A673 (cell line): ENCODE measurements at regions of chr16 and their contacts with region 1.

Region 1: GRCh38 chr16:18801197-18801972 is at the start of gene ARL6IP1:
- DNase-seq: peak; percentile 99
- H3K4me3 ChIP-seq: peak within 1 kb of the TSS; percentile 94
- H3K27ac ChIP-seq: peak within 1 kb of the TSS; percentile 95
- H3K4me1 ChIP-seq: peaks cover 51% of the 10 kb centered on the region
- H3K27me3 ChIP-seq: no peaks in the 10 kb centered on the region
- CTCF ChIP-seq: peak; percentile 94
- total RNA-seq, gene ARL6IP1: 179 and 223 TPM in 2 replicates

Region 2: DNA sequence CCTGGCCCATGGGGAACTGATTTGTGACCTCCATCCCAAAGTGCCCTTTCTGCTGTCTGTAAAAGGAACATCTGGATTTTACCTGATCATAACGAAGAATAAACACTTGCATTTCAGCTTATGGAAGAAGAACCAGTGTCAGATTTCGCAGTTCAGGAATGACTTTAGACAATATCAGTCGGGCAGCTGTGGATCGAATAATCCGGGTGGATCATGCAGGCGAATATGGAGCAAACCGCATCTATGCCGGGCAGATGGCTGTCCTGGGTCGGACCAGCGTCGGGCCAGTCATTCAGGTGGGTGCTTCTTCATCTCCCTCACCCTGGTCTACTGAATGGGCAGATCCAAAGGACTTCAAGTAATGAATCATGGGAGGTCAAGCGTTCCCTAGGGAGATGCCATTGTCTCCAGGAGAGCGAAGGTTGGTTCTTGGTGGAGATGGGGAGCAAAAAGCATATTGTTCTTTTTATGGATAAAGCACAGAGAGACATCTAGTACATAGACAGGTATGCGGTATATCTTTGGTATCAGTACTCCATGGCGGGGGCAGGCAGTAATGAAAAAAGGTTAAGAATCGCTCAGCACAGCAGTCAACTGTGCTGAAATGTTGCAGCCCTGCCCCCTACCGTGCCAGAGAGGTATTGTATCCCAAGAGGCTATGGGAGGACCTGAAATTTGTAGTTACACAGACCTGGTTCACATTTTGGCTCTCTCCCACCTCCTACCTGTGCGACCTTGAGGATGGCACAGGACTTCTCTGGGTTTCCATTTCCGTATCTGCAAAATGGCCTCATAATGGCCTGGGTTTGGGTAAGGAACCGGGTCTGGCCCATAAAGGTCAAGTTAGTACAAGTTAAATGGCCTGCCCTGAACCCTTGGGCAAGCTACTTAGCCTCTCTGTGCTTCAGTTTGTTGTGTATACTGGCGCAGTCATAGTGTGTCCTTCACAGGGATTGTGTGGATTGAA is 270.7 kb after region 1 on chr16:
- CTCF ChIA-PET with region 1: no interaction called
- POLR2A ChIA-PET with region 1: no interaction called
- intact Hi-C with region 1: loop called (anchors 10 kb)
- DNase-seq: peak; percentile 72
- H3K4me3 ChIP-seq: no peak overlapping the region
- H3K27ac ChIP-seq: no peak overlapping the region
- H3K4me1 ChIP-seq: peaks cover 9% of the 10 kb centered on the region
- H3K27me3 ChIP-seq: no peaks in the 10 kb centered on the region
- CTCF ChIP-seq: peak; percentile 75